SK-N-SH (cell line): ENCODE measurements at regions of chr3 and their contacts with region 1.

Region 1: GRCh38 chr3:142987080-142987700 is 14.2 kb upstream of the U2SURP start:
- DNase-seq: peak; percentile 52
- H3K4me3 ChIP-seq: no peak overlapping the region
- H3K27ac ChIP-seq: no peak overlapping the region
- H3K4me1 ChIP-seq: 0 out of 4 replicates have a peak, but pooled peaks cover 0 to 2% of the 10 kb centered on the region in 2 experiments
- H3K27me3 ChIP-seq: no peaks in the 10 kb centered on the region
- CTCF ChIP-seq: peak; percentile 84
- EP300 ChIP-seq: no peak
- RAD21 ChIP-seq: peak; percentile 74

Region 2: DNA sequence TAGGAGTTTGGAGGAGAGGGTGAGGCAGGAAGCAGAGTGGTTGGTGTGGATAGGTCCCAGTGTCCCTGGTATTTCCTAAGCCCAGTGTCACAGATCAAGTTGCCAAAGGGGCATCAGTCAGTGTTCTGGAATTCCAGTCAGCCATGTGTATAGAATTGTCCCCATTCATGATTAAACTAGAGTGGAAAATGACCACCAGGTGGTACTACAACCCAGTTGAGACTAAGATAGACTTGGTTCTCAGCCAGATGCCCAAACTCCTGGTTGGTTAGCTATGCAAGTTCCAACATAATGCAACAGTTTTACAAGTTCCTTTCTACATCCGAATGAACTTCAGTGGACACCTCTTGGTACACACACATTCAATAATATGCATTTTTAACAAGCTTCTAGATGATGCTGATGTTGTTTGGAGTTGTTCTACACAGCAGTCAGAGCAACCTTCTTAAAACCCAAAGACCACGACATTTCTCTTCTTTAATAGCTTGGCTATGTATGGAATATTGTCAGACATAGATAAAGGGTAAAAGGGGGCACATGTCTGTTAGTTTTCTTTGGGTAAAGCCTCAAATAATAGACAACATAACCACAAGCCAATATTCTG is 400.3 kb before region 1 on chr3:
- CTCF ChIA-PET with region 1: interaction called, 22 read pairs
- POLR2A ChIA-PET with region 1: no interaction called
- DNase-seq: peak; percentile 64
- H3K4me3 ChIP-seq: no peak overlapping the region
- H3K27ac ChIP-seq: no peak overlapping the region
- H3K4me1 ChIP-seq: no peaks in the 10 kb centered on the region
- H3K27me3 ChIP-seq: no peaks in the 10 kb centered on the region
- CTCF ChIP-seq: peak; percentile 76
- EP300 ChIP-seq: no peak
- RAD21 ChIP-seq: peak; percentile 89

Region 3: GRCh38 chr3:142866841-142867631 is 120.2 kb before region 1 on chr3:
- CTCF ChIA-PET with region 1: no interaction called
- POLR2A ChIA-PET with region 1: no interaction called
- DNase-seq: no peak
- H3K4me3 ChIP-seq: no peak overlapping the region; a peak in 1 of 4 replicates
- H3K27ac ChIP-seq: no peak overlapping the region
- H3K4me1 ChIP-seq: peaks cover 4 to 14% of the 10 kb centered on the region in 2 experiments; a peak in 3 of 4 replicates
- H3K27me3 ChIP-seq: no peaks in the 10 kb centered on the region
- CTCF ChIP-seq: peak; percentile 43
- EP300 ChIP-seq: no peak
- RAD21 ChIP-seq: no peak

Region 4: GRCh38 chr3:143192193-143192592 is 205.0 kb after region 1 on chr3:
- CTCF ChIA-PET with region 1: no interaction called
- POLR2A ChIA-PET with region 1: no interaction called
- DNase-seq: no peak
- H3K4me3 ChIP-seq: no peak overlapping the region
- H3K27ac ChIP-seq: no peak overlapping the region
- H3K4me1 ChIP-seq: no peaks in the 10 kb centered on the region
- H3K27me3 ChIP-seq: no peaks in the 10 kb centered on the region
- CTCF ChIP-seq: no peak
- EP300 ChIP-seq: no peak
- RAD21 ChIP-seq: no peak